Right lobe of liver (tissue), 6 donors: ENCODE measurements at regions of chr1 and their contacts with region 1.

Region 1: GRCh38 chr1:212070720-212071302 is 35.3 kb downstream of the DTL start:
- DNase-seq: no peak
- ATAC-seq: peak; percentile 86 to 94 (median 90)
- H3K4me3 ChIP-seq: no peak overlapping the region
- H3K27ac ChIP-seq: no peak overlapping the region
- H3K4me1 ChIP-seq: no peaks in the 10 kb centered on the region
- H3K27me3 ChIP-seq: no peaks in the 10 kb centered on the region
- CTCF ChIP-seq: peak; percentile 72 to 84 (median 77)
- POLR2A ChIP-seq: no peak

Region 2: GRCh38 chr1:211680752-211681327 is 390.0 kb before region 1 on chr1:
- intact Hi-C with region 1: no loop called
- DNase-seq: peak; percentile 62 to 76 (median 71)
- ATAC-seq: peak; percentile 88 to 93 (median 90)
- H3K4me3 ChIP-seq: no peak overlapping the region
- H3K27ac ChIP-seq: no peak overlapping the region
- H3K4me1 ChIP-seq: no peaks in the 10 kb centered on the region
- H3K27me3 ChIP-seq: no peaks in the 10 kb centered on the region
- CTCF ChIP-seq: peak; percentile 63 to 91 (median 65)
- POLR2A ChIP-seq: no peak

Region 3: GRCh38 chr1:212375986-212376385 is 305.2 kb after region 1 on chr1:
- intact Hi-C with region 1: loop called in 1 of 2 experiments (anchors 10 kb)
- DNase-seq: no peak
- ATAC-seq: no peak
- H3K4me3 ChIP-seq: no peak overlapping the region
- H3K27ac ChIP-seq: no peak overlapping the region
- H3K4me1 ChIP-seq: no peaks in the 10 kb centered on the region
- H3K27me3 ChIP-seq: no peaks in the 10 kb centered on the region
- CTCF ChIP-seq: no peak
- POLR2A ChIP-seq: no peak